ENCODE measurements at regions of chr16 and their contacts with region 1.

Region 1: GRCh38 chr16:27179500-27180072 is 23.7 kb upstream of the KDM8 start:
- DNase-seq: peak; percentile 89 to 95 (median 92)
- ATAC-seq: peak; percentile 98
- H3K4me3 ChIP-seq: no peak overlapping the region
- H3K4me1 ChIP-seq: no peaks in the 10 kb centered on the region
- CTCF ChIP-seq: peak; percentile 90

Region 2: DNA sequence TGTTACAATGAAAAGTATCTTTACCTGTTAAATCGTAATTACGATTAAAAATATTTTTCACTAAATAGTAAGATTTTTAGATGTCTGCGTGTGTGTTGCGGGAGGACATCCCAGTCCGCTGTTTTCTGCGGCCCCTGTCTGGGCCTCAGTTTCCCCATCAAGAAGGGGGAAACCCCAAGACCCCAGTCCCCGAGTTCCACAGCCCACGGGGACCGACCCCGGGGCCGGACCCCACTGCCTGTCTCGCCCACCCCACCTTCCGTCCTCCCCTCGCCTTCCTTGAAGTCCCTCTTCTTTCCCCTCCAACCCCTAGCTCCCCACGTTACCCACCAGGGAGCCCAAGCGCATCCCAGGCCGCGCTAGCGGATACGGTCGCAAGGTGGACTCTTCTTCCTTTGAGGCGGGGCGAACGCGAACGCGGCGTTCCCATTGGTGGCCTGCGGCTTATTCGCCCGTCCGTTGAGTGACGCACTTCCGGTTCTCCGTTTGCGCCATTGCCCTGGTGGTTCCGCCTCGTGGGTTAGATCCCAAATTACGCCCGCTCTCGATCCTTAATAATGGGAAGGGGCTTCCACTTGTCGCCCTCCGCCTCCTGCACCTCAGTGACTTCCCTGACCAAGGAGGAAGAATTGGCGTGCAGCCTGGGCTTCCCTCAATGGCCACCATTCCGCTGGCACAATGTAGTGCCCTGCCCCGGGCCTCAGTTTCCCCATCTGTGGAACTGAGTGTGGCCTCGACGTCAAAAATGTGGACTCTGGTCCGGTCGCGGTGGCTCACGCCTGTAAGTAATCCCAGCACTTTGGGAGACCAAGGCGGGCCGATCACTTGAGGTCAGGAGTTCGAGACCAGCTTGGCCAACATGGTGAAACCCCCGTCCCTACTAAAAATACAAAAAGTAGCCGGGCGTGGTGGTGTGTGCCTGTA is 89.1 kb after region 1 on chr16 and contains the start of gene NSMCE1:
- intact Hi-C with region 1: no loop called
- DNase-seq: peak; percentile 99
- ATAC-seq: peak; percentile 100
- H3K4me3 ChIP-seq: peak within 1 kb of the TSS; percentile 44
- H3K4me1 ChIP-seq: peaks cover 9% of the 10 kb centered on the region
- CTCF ChIP-seq: no peak
- total RNA-seq, gene NSMCE1: 39.3 to 50.1 (median 48.9) TPM

Region 3: DNA sequence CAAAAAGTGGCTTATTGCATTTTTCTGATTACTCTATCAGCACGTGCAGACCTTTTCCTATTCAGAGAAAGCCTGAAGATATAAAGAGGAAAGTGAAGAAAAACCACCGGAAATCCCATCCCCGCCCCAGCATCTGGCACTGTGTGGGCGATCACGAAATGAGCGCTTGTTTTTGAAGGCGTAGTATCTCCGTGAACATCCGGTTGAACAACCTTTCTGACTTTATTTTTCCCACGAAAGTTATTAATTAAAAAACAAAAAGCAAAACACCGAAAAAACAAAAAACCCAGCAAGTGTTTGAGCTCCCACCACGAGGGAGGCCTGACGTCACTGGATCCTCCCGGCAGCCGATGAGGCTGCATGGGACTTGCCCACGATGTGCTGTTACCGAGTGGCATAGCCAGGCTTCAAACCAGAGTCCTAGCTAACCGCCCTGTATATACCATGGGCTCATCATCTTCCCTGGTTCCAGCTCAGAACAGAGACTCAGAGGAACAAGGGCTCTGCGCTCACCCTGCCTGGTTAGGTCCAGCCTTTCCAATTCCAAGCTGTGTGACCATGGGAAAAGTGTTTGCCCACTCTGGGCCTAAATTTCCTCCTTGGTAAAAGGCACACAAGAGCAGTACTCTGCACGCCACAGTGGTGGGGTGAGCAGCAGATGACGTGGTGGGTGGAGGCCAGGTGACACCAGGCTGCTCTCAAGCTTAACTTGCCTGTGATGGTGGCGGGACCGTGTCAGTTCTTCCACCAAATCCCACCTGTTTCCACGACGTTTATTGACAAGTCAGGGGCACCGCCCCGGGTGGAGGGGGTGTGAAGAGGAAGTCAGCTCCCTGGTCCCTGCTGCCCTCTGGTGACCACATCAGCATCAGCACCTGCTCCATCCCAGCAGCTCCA is 188.1 kb after region 1 on chr16:
- intact Hi-C with region 1: loop called in 1 of 2 experiments (anchors 5 kb)
- DNase-seq: peak; percentile 87 to 92 (median 90)
- ATAC-seq: peak; percentile 82
- H3K4me3 ChIP-seq: no peak overlapping the region
- H3K4me1 ChIP-seq: peaks cover 29% of the 10 kb centered on the region
- CTCF ChIP-seq: peak; percentile 60

Region 4: GRCh38 chr16:27455700-27456099 is 276.1 kb after region 1 on chr16:
- intact Hi-C with region 1: loop called in 1 of 2 experiments (anchors 5 kb)
- DNase-seq: no peak
- ATAC-seq: no peak
- H3K4me3 ChIP-seq: no peak overlapping the region
- H3K4me1 ChIP-seq: no peaks in the 10 kb centered on the region
- CTCF ChIP-seq: no peak

Measured in mucosa of descending colon (tissue), 3 donors.